ENCODE measurements at regions of chr12 and their contacts with region 1.

Region 1: GRCh38 chr12:121668750-121669520 is 519 bp downstream of the MORN3 start:
- DNase-seq: peak; percentile 46 to 85 (median 60)
- ATAC-seq: no peak
- H3K4me3 Mint-ChIP-seq: peak overlapping the region in 7 of 10 donors; percentile 18 to 68 (median 45)
- H3K27ac Mint-ChIP-seq: peak overlapping the region in 9 of 10 donors; percentile 48 to 94 (median 85)
- H3K4me1 Mint-ChIP-seq: peaks cover 24 to 64% (median 62%) of the 10 kb centered on the region in 4 donors
- H3K27me3 Mint-ChIP-seq: no peaks in the 10 kb centered on the region

Region 2: DNA sequence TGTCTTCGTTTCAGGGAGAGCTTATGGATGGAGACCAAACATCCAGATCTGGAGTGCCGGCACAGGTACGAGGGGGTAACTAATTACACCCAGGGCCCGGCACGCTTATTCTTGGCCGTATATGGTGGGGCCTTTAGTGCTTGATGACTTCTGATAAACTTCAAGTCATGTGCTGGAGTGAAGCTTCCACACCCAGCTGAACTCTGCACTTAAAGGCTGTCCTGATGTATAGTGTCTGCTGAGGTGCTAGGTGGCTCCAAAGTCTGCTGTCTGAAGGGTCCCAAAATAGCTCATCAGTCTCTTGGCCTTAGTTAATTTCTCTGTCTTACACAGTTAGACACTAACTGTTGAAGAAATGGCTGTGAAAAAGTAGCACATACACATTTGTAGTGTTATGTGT is 251.1 kb before region 1 on chr12:
- POLR2A ChIA-PET with region 1: no interaction called
- DNase-seq: no peak
- ATAC-seq: no peak
- H3K4me3 Mint-ChIP-seq: no peak overlapping the region
- H3K27ac Mint-ChIP-seq: peak overlapping the region in 2 of 10 donors; percentile 69 to 81
- H3K4me1 Mint-ChIP-seq: peaks cover 11 to 29% (median 15%) of the 10 kb centered on the region in 4 donors
- H3K27me3 Mint-ChIP-seq: no peaks in the 10 kb centered on the region

Region 3: DNA sequence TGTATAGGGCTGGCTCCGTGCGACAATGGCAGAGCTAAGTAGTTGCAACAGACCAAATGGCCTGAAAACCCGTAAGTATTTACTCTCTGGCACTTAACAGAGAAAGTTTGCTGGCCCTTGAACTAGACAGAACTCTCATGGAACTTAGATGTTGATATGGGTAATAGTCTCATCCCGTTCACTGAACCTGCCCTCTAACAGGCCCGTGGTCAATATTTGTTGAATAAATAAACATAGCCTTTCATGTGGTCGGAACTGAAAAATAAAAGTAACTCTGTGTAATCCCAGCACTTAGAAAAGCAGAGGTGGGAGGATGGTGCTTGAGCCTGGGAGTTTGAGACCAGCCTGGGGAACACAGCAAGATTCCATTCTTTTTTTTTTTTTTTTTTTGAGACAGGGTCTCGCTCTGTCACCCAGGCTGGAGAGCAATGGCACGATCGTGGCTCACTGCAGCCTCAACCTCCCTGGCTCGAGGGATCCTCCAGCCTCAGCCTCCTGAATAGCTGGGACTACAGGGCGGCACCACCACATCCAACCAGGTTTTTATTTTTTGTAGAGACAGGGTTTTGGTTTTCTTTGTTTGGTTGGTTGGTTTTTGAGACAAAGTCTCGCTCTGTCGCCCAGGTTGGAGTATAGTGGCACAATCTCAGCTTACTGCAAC is 117.8 kb before region 1 on chr12:
- POLR2A ChIA-PET with region 1: interaction called, 25 read pairs
- DNase-seq: no peak
- ATAC-seq: no peak
- H3K4me3 Mint-ChIP-seq: no peak overlapping the region
- H3K27ac Mint-ChIP-seq: peak overlapping the region in 2 of 10 donors; percentile 32 to 89
- H3K4me1 Mint-ChIP-seq: peaks cover 0 to 12% (median 3%) of the 10 kb centered on the region in 4 donors
- H3K27me3 Mint-ChIP-seq: no peaks in the 10 kb centered on the region

Region 4: DNA sequence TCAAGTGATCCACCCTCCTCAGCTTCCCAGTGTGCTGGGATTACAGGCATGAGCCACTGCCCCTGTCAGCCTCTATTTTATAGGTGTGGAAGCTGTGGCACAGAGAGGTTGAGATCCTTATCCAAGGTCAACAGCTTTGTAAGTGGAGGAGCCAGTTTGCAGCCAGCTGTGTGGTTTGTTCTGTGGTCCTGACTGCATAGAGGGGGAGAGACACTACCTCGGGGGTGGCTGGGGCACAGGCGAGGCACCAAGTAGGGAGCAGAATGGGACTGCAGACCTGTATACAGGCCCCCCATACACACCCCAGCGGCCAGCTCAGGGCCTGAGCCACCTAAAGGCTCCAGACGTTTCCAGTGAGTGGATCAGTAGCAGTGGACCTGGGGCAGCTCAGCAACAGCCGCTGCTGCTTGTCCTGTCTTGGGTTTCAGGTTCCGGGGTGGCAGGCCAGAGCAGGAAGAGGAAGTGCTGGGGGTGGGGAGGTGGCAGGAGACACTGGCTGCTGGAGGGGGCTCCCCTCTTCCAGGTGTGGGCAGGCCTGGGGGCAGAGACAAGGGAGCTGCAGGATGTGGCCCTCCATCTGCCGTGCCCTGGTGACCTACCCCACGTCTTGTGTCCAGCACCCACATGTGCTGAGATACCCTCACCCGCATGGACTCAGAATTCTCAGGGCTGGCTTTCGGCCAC is 31.6 kb before region 1 on chr12:
- POLR2A ChIA-PET with region 1: interaction called, 291 read pairs
- DNase-seq: peak; percentile 23 to 78 (median 52)
- ATAC-seq: peak; percentile 72 to 84
- H3K4me3 Mint-ChIP-seq: peak overlapping the region; percentile 64 to 85 (median 78)
- H3K27ac Mint-ChIP-seq: peak overlapping the region; percentile 82 to 97 (median 94)
- H3K4me1 Mint-ChIP-seq: peaks cover 24 to 82% (median 65%) of the 10 kb centered on the region in 4 donors
- H3K27me3 Mint-ChIP-seq: no peaks in the 10 kb centered on the region

Region 5: DNA sequence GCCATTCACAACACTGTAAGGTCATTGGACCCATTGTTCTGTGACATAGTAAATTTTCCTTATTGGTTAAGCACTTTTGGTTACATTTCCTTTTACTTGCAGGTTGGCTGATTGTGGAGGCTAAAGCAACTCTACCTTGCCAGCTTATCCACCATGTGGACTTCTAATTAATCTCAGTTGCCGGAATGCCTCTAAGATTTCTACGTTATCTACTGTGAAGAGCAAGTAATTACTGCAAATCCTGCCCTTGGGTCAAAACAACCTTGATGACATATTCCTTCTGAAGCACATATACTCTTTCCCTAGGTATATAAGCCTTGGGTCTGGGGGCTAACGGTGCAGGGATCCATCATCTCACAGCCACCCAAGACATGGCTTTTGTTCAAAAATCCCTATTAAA is 20.0 kb after region 1 on chr12:
- POLR2A ChIA-PET with region 1: interaction called, 19 read pairs
- DNase-seq: no peak
- ATAC-seq: no peak
- H3K4me3 Mint-ChIP-seq: peak overlapping the region in 1 of 10 donors; percentile 7
- H3K27ac Mint-ChIP-seq: peak overlapping the region in 6 of 10 donors; percentile 27 to 68 (median 48)
- H3K4me1 Mint-ChIP-seq: peaks cover 4 to 13% (median 11%) of the 10 kb centered on the region in 4 donors
- H3K27me3 Mint-ChIP-seq: no peaks in the 10 kb centered on the region

Region 6: DNA sequence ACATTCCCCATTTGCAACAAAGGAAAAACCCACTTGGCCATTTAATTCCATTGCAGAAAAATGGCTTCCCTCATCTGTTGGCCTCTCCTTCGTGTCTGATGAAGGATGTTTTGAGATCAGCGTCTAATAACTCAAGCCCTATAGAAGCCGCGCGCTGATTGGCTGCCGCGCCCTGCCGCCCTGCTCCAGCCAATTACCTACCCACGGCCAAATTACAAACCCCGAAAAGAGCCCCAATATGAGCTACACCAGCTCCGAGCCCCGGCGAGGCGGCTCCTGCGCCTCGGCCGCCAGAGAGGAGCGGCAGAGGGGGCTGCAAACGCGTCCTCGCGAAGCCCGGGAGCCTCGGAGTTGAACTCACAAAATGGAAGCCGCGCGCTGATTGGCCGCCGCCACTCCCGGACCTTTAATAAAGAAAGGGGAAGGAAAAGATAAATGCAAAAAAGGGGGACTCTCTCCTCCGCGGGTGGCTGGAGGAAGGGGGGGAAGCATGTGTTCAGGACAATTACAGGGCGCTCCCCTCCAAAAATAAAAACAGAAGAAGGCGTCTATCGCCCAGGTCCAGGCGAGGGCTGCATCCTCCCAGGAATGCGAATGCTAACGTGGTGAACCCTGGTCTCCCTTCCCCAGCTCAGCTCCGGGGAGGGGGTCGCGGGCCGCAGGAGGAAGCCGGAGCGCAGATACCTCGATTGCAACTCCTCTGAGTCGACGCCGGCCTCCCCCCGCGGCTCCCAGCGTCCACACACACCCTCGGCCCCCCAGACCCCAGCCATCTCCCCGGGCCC is 134.1 kb after region 1 on chr12:
- POLR2A ChIA-PET with region 1: interaction called, 21 read pairs
- DNase-seq: peak; percentile 79 to 96 (median 90)
- ATAC-seq: peak; percentile 51 to 55
- H3K4me3 Mint-ChIP-seq: peak overlapping the region; percentile 90 to 100 (median 96)
- H3K27ac Mint-ChIP-seq: peak overlapping the region; percentile 99 to 100 (median 99)
- H3K4me1 Mint-ChIP-seq: peaks cover 34 to 43% (median 37%) of the 10 kb centered on the region in 4 donors
- H3K27me3 Mint-ChIP-seq: no peaks in the 10 kb centered on the region